ENCODE measurements at regions of chr13 and their contacts with region 1.

Region 1: DNA sequence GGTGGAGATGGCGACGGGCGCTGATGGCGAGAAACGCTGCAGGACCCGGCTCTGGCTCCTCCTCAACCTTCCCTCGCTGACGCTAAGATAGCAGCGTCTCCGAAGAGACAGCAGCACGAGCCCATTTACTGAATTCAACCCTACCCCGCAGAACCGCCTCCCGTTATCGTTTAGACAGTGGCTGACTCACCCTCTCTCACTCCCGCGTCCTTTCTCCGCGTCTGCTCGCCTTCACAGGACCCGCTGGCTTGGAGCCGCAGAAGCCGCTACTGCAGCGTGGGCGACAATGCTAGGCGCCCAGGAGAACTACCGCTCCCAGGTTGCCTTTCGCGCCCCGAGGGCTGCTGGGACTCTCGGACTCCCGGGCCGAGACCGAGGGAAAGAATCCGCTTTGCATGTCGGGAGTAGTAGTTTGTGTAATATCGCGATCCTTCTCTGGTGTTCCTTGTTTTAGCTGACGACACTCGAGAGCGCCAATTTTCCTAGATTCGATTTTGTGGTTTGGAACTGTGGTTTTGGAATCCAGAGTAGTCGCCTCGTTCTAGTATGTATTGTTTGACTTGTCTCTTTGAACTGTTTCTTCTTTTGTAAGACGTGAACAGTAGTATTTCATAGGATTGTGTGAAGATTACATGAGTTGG is at the start of gene KBTBD6:
- DNase-seq: peak; percentile 94 to 95
- H3K4me3 ChIP-seq: peak within 1 kb of the TSS; percentile 89 to 90
- H3K27ac ChIP-seq: peak within 1 kb of the TSS; percentile 82 to 89
- H3K4me1 ChIP-seq: peaks cover 0 to 4% of the 10 kb centered on the region in 2 donors
- H3K27me3 ChIP-seq: no peaks in the 10 kb centered on the region
- CTCF ChIP-seq: peak in 1 of 4 experiments; percentile 37
- POLR2A ChIP-seq: peak; percentile 59 to 63
- total RNA-seq, gene KBTBD6: 6.1 to 33.9 (median 15.2) TPM

Region 2: GRCh38 chr13:41193919-41194824 is 61.5 kb after region 1 on chr13 and contains the start of gene KBTBD7:
- intact Hi-C with region 1: loop called (anchors 10 kb)
- DNase-seq: peak; percentile 94 to 96
- H3K4me3 ChIP-seq: peak within 1 kb of the TSS; percentile 60 to 81
- H3K27ac ChIP-seq: peak within 1 kb of the TSS; percentile 84 to 89
- H3K4me1 ChIP-seq: peaks cover 0 to 4% of the 10 kb centered on the region in 2 donors
- H3K27me3 ChIP-seq: no peaks in the 10 kb centered on the region
- CTCF ChIP-seq: peak in 1 of 4 experiments; percentile 31
- POLR2A ChIP-seq: peak; percentile 71 to 74
- total RNA-seq, gene KBTBD7: 5.9 to 44.0 (median 8.8) TPM

Region 3: DNA sequence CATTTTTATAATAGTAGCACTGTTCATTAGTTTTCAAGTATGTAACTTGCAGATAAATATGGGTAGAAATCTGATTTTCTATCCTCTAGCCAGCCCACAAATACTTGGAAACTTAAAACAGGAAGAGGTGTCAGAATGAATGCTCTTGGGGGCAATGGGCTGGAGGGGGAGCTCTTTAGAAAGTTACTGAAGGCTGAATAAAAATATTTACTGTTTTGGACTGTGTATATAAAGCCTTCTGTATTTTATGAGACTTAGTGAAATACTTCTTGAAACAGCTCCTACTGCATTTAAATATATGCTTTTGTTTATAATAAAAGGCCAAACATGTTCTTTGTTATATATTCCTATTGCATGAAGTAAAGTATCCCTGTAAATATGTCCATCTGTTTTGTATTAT is 463.6 kb after region 1 on chr13:
- intact Hi-C with region 1: no loop called
- DNase-seq: no peak
- H3K4me3 ChIP-seq: no peak overlapping the region
- H3K27ac ChIP-seq: peak overlapping the region in 1 of 2 donors; percentile 17
- H3K4me1 ChIP-seq: no peaks in the 10 kb centered on the region
- H3K27me3 ChIP-seq: no peaks in the 10 kb centered on the region
- CTCF ChIP-seq: no peak
- POLR2A ChIP-seq: no peak